IMR-90 (cell line): ENCODE measurements at regions of chr13 and their contacts with region 1.

Region 1: GRCh38 chr13:109145631-109146030 is 516.2 kb downstream of the MYO16 start:
- DNase-seq: peak; percentile 72
- ATAC-seq: peak; percentile 82
- H3K4me3 ChIP-seq: no peak overlapping the region
- H3K27ac ChIP-seq: no peak overlapping the region
- H3K4me1 ChIP-seq: peaks cover 9% of the 10 kb centered on the region
- H3K27me3 ChIP-seq: peaks cover 12% of the 10 kb centered on the region
- CTCF ChIP-seq: peak; percentile 92
- POLR2A ChIP-seq: no peak
- RAD21 ChIP-seq: peak; percentile 96

Region 2: GRCh38 chr13:108924134-108924533 is 221.5 kb before region 1 on chr13:
- CTCF ChIA-PET with region 1: no interaction called
- POLR2A ChIA-PET with region 1: no interaction called
- dilution Hi-C with region 1: no loop called
- in situ Hi-C with region 1: no loop called
- intact Hi-C with region 1: no loop called
- DNase-seq: peak; percentile 84
- ATAC-seq: peak; percentile 74
- H3K4me3 ChIP-seq: no peak overlapping the region
- H3K27ac ChIP-seq: no peak overlapping the region; the same call in 1 of the 2 replicates
- H3K4me1 ChIP-seq: peaks cover 2% of the 10 kb centered on the region
- H3K27me3 ChIP-seq: no peaks in the 10 kb centered on the region
- CTCF ChIP-seq: no peak
- POLR2A ChIP-seq: no peak
- RAD21 ChIP-seq: no peak

Region 3: GRCh38 chr13:108961542-108962125 is 184.0 kb before region 1 on chr13:
- CTCF ChIA-PET with region 1: interaction called, 3 read pairs
- POLR2A ChIA-PET with region 1: no interaction called
- dilution Hi-C with region 1: no loop called
- in situ Hi-C with region 1: no loop called
- intact Hi-C with region 1: loop called (anchors 2 kb)
- DNase-seq: peak; percentile 62
- ATAC-seq: peak; percentile 56
- H3K4me3 ChIP-seq: no peak overlapping the region
- H3K27ac ChIP-seq: no peak overlapping the region
- H3K4me1 ChIP-seq: peaks cover 11% of the 10 kb centered on the region
- H3K27me3 ChIP-seq: no peaks in the 10 kb centered on the region
- CTCF ChIP-seq: peak; percentile 88
- POLR2A ChIP-seq: no peak
- RAD21 ChIP-seq: peak; percentile 94

Region 4: GRCh38 chr13:109180905-109181425 is 35.3 kb after region 1 on chr13:
- CTCF ChIA-PET with region 1: no interaction called
- POLR2A ChIA-PET with region 1: no interaction called
- dilution Hi-C with region 1: no loop called
- in situ Hi-C with region 1: no loop called
- intact Hi-C with region 1: no loop called
- DNase-seq: peak; percentile 90
- ATAC-seq: peak; percentile 93
- H3K4me3 ChIP-seq: no peak overlapping the region
- H3K27ac ChIP-seq: peak overlapping the region; percentile 13; the same call in 1 of the 2 replicates
- H3K4me1 ChIP-seq: peaks cover 3% of the 10 kb centered on the region
- H3K27me3 ChIP-seq: no peaks in the 10 kb centered on the region
- CTCF ChIP-seq: no peak
- POLR2A ChIP-seq: no peak
- RAD21 ChIP-seq: no peak

Region 5: DNA sequence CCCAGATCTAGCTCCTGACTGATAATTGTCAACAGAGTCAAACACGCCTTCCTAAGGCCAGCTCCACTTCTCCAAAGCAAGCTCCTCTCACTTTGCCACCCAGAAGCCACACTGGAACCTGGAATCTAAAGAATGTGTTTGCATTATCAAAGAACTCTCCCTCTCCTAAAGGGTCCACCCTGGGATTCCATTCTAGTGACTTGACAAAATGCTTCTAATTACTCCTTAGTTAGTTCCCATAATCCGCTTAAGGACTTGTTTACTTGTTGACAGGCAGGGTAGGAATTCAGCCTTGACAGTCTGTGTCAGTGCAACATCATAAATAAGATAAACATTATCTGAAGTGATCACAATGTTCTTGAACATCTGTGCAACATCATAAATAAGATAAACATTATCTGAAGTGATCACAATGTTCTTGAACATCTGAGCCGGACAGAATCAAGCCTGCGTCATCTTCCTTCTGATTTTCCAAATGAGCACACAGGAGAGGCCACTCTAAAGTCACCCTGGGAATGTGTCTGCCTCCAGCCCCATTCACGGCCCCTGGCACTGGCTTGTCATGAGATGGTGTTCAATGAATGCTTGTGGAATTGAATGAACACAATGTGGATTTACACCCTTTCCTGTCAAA is 128.7 kb after region 1 on chr13:
- CTCF ChIA-PET with region 1: interaction called, 3 read pairs
- POLR2A ChIA-PET with region 1: no interaction called
- dilution Hi-C with region 1: no loop called
- in situ Hi-C with region 1: no loop called
- intact Hi-C with region 1: loop called (anchors 5 kb)
- DNase-seq: peak; percentile 72
- ATAC-seq: peak; percentile 86
- H3K4me3 ChIP-seq: no peak overlapping the region
- H3K27ac ChIP-seq: peak overlapping the region; percentile 36
- H3K4me1 ChIP-seq: peaks cover 10% of the 10 kb centered on the region; the same call in 1 of the 2 replicates
- H3K27me3 ChIP-seq: no peaks in the 10 kb centered on the region
- CTCF ChIP-seq: no peak
- POLR2A ChIP-seq: no peak
- RAD21 ChIP-seq: no peak

Region 6: GRCh38 chr13:109383670-109384069 is 238.0 kb after region 1 on chr13:
- CTCF ChIA-PET with region 1: no interaction called
- POLR2A ChIA-PET with region 1: no interaction called
- dilution Hi-C with region 1: no loop called
- in situ Hi-C with region 1: no loop called
- intact Hi-C with region 1: loop called (anchors 2 kb)
- DNase-seq: peak; percentile 79
- ATAC-seq: peak; percentile 41
- H3K4me3 ChIP-seq: no peak overlapping the region
- H3K27ac ChIP-seq: no peak overlapping the region
- H3K4me1 ChIP-seq: peaks cover 12% of the 10 kb centered on the region
- H3K27me3 ChIP-seq: no peaks in the 10 kb centered on the region
- CTCF ChIP-seq: no peak
- POLR2A ChIP-seq: no peak
- RAD21 ChIP-seq: no peak

Region 7: DNA sequence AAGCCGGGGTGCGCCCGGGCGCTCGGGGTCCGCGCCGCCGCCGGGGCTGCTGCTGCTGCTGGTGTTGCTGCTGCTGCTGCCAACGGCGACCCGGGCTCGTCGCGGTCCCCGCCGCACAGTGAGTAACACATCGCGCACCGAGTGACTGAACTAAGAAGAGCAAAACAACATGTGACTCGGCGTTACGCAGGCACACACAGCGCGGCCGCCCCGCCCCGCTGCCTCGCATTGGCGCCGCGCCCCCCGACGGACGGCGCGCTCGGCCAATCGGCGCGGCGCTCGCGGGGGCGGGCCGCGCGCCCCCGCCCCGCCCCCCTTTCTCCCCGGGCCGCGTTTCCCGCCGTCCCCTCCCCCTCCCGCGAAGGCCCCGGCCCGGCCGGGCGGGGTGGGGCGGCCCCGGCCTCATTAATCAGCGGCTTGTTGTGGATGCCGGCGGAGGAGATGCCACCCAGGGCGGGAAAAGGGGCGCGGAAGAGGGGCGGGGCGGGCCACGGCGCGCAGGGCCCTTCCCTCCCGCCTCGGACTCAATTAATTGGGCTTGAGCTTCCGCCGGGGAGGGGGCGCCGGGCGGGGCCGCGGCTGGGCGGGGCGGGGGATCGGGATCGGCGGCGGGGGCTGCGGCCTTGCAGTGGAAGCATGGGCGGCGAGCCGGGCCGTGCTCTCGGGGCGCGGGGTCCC is 641.0 kb after region 1 on chr13 and contains the start of gene IRS2:
- CTCF ChIA-PET with region 1: interaction called, 3 read pairs
- POLR2A ChIA-PET with region 1: no interaction called
- dilution Hi-C with region 1: no loop called
- in situ Hi-C with region 1: loop called (anchors 5 kb)
- intact Hi-C with region 1: loop called (anchors 1 kb)
- DNase-seq: peak; percentile 90
- ATAC-seq: peak; percentile 82
- H3K4me3 ChIP-seq: peak within 1 kb of the TSS; percentile 92
- H3K27ac ChIP-seq: peak within 1 kb of the TSS; percentile 87
- H3K4me1 ChIP-seq: peaks cover 7% of the 10 kb centered on the region
- H3K27me3 ChIP-seq: peaks cover 2% of the 10 kb centered on the region; the same call in 1 of the 2 replicates
- CTCF ChIP-seq: no peak
- POLR2A ChIP-seq: peak; percentile 96
- RAD21 ChIP-seq: no peak
- total RNA-seq, gene IRS2: 0.36 and 0.83 TPM in 2 replicates